WTC11 (cell line): ENCODE measurements at regions of chr1 and their contacts with region 1.

Region 1: DNA sequence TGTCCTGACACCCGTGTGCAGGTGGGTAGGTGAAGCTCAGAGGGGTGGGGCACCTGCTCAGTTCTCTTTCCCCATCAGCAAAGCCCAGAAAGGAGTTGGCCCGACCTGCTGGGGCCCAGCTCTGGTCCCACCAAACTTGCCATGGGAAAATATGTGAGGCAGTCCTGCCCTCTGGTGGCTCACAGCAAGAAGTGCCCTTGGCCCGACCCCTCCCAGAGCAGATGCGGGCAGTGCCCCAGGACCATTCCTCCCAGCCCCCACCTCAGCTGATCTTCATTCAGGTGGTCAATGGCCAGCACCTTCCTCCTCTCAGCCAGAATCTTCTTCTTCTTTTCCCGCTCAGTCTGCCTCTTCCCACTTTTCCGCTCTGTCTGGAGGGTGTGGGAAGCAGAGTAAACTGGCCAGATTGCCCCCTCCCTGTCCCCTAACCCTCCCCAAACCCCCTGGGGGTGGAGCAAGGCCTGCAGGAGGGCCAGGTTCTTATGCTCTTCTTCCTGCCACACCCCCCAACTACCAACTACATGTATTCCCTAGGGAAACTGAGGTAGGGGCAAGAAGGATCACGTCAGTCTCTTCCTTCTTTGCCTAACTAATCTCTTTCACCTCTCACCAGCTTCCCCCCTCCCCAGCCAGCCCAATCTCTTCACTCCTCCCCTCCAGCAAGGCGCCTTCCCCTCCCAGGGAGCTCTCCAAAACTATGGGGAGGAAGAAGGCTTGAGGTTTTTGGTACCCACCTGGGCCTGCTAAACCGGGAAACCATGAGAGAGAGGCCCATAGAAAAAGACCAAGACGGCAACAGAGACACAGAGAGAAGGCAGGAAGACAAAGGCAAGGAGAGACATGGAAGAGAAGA is 15.6 kb downstream of the TNNT2 start:
- DNase-seq: peak; percentile 85
- ATAC-seq: peak; percentile 89
- H3K4me3 Mint-ChIP-seq: no peak overlapping the region
- H3K27ac Mint-ChIP-seq: no peak overlapping the region
- H3K4me1 Mint-ChIP-seq: peaks cover 18% of the 10 kb centered on the region
- H3K27me3 Mint-ChIP-seq: peaks cover 3% of the 10 kb centered on the region; the same call in 1 of the 2 replicates
- CTCF ChIP-seq: peak; percentile 90

Region 2: GRCh38 chr1:201254625-201255506 is 107.0 kb before region 1 on chr1:
- CTCF ChIA-PET with region 1: interaction called, 80 read pairs
- POLR2A ChIA-PET with region 1: interaction called, 3 read pairs
- DNase-seq: peak; percentile 96
- ATAC-seq: peak; percentile 81
- H3K4me3 Mint-ChIP-seq: no peak overlapping the region
- H3K27ac Mint-ChIP-seq: no peak overlapping the region
- H3K4me1 Mint-ChIP-seq: peaks cover 5% of the 10 kb centered on the region; the same call in 1 of the 2 replicates
- H3K27me3 Mint-ChIP-seq: no peaks in the 10 kb centered on the region; the same call in 1 of the 2 replicates
- CTCF ChIP-seq: peak; percentile 99

Region 3: GRCh38 chr1:201282931-201283829 is 78.7 kb before region 1 on chr1 and contains the start of gene PKP1:
- CTCF ChIA-PET with region 1: interaction called, 12 read pairs
- POLR2A ChIA-PET with region 1: no interaction called
- DNase-seq: peak; percentile 44
- ATAC-seq: peak; percentile 83
- H3K4me3 Mint-ChIP-seq: peak within 1 kb of the TSS; percentile 63
- H3K27ac Mint-ChIP-seq: no peak within 1 kb of the TSS
- H3K4me1 Mint-ChIP-seq: peaks cover 13% of the 10 kb centered on the region
- H3K27me3 Mint-ChIP-seq: peaks cover 45% of the 10 kb centered on the region
- CTCF ChIP-seq: no peak
- total RNA-seq, gene PKP1: 0.18 to 0.41 TPM (median 0.24 TPM) in 3 replicates

Region 4: DNA sequence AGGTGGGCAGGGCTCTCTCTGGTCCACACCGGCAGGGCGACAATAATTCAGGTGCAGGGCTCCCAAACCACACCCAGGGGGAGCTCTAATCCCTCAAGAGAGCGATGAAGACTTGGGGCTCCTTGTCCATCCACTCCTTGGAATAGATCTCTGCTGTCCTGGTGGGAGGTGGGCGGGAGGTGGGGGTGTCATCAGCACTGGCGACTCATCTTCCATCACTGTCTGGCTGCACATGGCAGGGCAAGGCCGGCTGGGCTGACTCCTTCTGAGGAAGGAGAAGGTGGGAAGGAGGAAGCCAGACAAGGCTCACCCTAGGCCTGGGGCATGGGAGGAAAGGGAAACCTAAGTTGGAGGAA is 13.7 kb before region 1 on chr1:
- CTCF ChIA-PET with region 1: interaction called, 175 read pairs
- POLR2A ChIA-PET with region 1: no interaction called
- DNase-seq: peak; percentile 81
- ATAC-seq: peak; percentile 87
- H3K4me3 Mint-ChIP-seq: no peak overlapping the region; the same call in 1 of the 2 replicates
- H3K27ac Mint-ChIP-seq: 0 out of 2 replicates have a peak overlapping the region, but pooled peaks have one; percentile 10
- H3K4me1 Mint-ChIP-seq: peaks cover 40% of the 10 kb centered on the region
- H3K27me3 Mint-ChIP-seq: no peaks in the 10 kb centered on the region; the same call in 1 of the 2 replicates
- CTCF ChIP-seq: peak; percentile 74

Region 5: GRCh38 chr1:201408176-201408833 is 46.4 kb after region 1 on chr1:
- CTCF ChIA-PET with region 1: interaction called, 15 read pairs
- POLR2A ChIA-PET with region 1: no interaction called
- DNase-seq: peak; percentile 94
- ATAC-seq: peak; percentile 95
- H3K4me3 Mint-ChIP-seq: no peak overlapping the region
- H3K27ac Mint-ChIP-seq: no peak overlapping the region
- H3K4me1 Mint-ChIP-seq: peaks cover 2% of the 10 kb centered on the region; the same call in 1 of the 2 replicates
- H3K27me3 Mint-ChIP-seq: no peaks in the 10 kb centered on the region; the same call in 1 of the 2 replicates
- CTCF ChIP-seq: peak; percentile 97